HepG2 (cell line): ENCODE measurements at regions of chr2 and their contacts with region 1.

Region 1: GRCh38 chr2:190088917-190089316 is 26.4 kb upstream of the MSTN start:
- DNase-seq: peak; percentile 73
- ATAC-seq: peak; percentile 77
- H3K4me3 ChIP-seq: no peak overlapping the region
- H3K27ac ChIP-seq: no peak overlapping the region
- H3K4me1 ChIP-seq: no peaks in the 10 kb centered on the region
- H3K27me3 ChIP-seq: no peaks in the 10 kb centered on the region
- CTCF ChIP-seq: peak; percentile 81
- EP300 ChIP-seq: no peak
- POLR2A ChIP-seq: no peak
- RAD21 ChIP-seq: peak; percentile 83

Region 2: DNA sequence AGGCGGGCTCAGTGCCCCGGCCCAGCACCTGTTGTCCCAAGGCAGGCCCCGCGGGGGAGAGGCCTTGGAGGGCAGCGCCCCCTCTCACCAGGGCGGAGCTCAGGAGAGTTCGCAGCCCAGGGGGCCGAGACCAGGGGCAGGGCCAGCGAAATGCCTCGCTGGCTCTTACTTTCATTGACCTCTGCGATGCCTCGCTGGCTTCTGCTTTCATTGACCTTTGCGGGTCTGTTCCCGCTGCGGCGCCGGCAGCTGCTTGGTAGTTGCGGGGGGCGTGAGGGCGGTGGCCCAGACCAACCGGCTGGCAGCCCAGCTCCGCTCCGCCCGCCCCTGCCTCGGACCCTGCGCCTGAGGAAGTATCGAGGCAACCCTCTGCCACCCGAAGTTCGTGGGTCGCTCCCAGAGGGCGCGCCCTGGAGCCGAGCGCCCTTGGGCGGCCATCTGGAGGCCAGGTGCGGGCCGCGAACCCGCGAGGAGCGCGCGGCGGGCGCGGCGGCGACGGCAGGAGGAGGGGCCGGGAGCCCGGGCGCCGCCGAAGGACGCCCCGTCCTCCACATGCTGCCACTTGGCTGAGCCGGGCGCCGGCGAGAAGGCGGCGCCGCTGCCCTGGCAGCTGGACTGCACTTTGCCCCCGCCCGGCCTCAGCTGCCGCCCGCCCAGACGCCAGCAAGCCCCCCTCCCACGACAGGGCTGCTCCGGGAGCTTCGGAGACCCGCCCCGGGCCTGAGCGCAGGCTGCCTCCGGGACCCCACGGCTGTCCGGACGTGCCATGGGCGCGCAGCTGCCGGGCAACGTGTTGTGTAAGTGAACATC is 91.6 kb after region 1 on chr2:
- CTCF ChIA-PET with region 1: interaction called, 20 read pairs
- POLR2A ChIA-PET with region 1: no interaction called
- in situ Hi-C with region 1: no loop called
- intact Hi-C with region 1: loop called (anchors 1 kb)
- DNase-seq: peak; percentile 86
- ATAC-seq: peak; percentile 94
- H3K4me3 ChIP-seq: peak overlapping the region; percentile 63 to 89 (median 77)
- H3K27ac ChIP-seq: peak overlapping the region; percentile 64
- H3K4me1 ChIP-seq: peaks cover 23% of the 10 kb centered on the region
- H3K27me3 ChIP-seq: no peaks in the 10 kb centered on the region; a peak in 1 of 5 replicates
- CTCF ChIP-seq: peak; percentile 95
- EP300 ChIP-seq: 0 out of 4 replicates have a peak, but pooled peaks of 1 of the 2 experiments have one; percentile 6
- POLR2A ChIP-seq: peak; percentile 31 to 80
- RAD21 ChIP-seq: peak; percentile 92

Region 3: GRCh38 chr2:190313880-190314279 is 225.0 kb after region 1 on chr2:
- CTCF ChIA-PET with region 1: interaction called, 17 read pairs
- POLR2A ChIA-PET with region 1: no interaction called
- in situ Hi-C with region 1: loop called (anchors 5 kb)
- intact Hi-C with region 1: loop called (anchors 1 kb)
- DNase-seq: no peak
- ATAC-seq: no peak
- H3K4me3 ChIP-seq: no peak overlapping the region
- H3K27ac ChIP-seq: no peak overlapping the region
- H3K4me1 ChIP-seq: peaks cover 56% of the 10 kb centered on the region
- H3K27me3 ChIP-seq: no peaks in the 10 kb centered on the region; a peak in 1 of 5 replicates
- CTCF ChIP-seq: no peak
- EP300 ChIP-seq: no peak
- POLR2A ChIP-seq: no peak
- RAD21 ChIP-seq: no peak

Region 4: GRCh38 chr2:190376591-190377245 is 287.8 kb after region 1 on chr2:
- CTCF ChIA-PET with region 1: interaction called, 8 read pairs
- POLR2A ChIA-PET with region 1: no interaction called
- in situ Hi-C with region 1: loop called (anchors 10 kb)
- intact Hi-C with region 1: loop called (anchors 1 kb)
- DNase-seq: no peak
- ATAC-seq: no peak
- H3K4me3 ChIP-seq: no peak overlapping the region
- H3K27ac ChIP-seq: no peak overlapping the region
- H3K4me1 ChIP-seq: peaks cover 45% of the 10 kb centered on the region
- H3K27me3 ChIP-seq: no peaks in the 10 kb centered on the region; a peak in 1 of 5 replicates
- CTCF ChIP-seq: no peak
- EP300 ChIP-seq: no peak
- POLR2A ChIP-seq: no peak
- RAD21 ChIP-seq: no peak

Region 5: DNA sequence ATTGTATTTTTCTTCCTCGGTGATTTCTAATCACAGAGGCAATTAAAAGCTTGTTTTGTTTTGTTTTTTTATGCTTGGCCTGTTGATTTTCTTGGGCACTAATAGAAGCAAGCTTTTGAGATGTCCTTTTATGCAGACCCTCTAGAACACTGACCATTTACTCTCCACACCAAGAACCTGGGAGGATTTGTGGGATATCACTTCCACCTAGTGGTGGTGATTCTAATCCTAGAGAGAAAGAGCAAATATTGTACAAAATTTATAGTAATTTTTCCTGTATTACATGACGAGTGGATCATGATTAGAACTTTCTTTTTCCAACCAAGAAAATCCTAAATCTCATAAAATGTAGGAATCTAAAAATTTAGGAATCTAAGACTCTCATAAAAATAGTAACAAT is 422.2 kb after region 1 on chr2:
- CTCF ChIA-PET with region 1: interaction called, 9 read pairs
- POLR2A ChIA-PET with region 1: no interaction called
- in situ Hi-C with region 1: loop called (anchors 10 kb)
- intact Hi-C with region 1: loop called (anchors 1 kb)
- DNase-seq: peak; percentile 54
- ATAC-seq: peak; percentile 67
- H3K4me3 ChIP-seq: no peak overlapping the region
- H3K27ac ChIP-seq: no peak overlapping the region
- H3K4me1 ChIP-seq: no peaks in the 10 kb centered on the region
- H3K27me3 ChIP-seq: no peaks in the 10 kb centered on the region
- CTCF ChIP-seq: peak; percentile 63
- EP300 ChIP-seq: no peak
- POLR2A ChIP-seq: no peak
- RAD21 ChIP-seq: peak; percentile 64